Head of caudate nucleus (tissue), 42 donors: ENCODE measurements at regions of chrX and their contacts with region 1.

Region 1: GRCh38 chrX:11533211-11533651 is 132.5 kb downstream of the ARHGAP6 start:
- DNase-seq: peak in 1 of 42 donors; percentile 1

Region 2: DNA sequence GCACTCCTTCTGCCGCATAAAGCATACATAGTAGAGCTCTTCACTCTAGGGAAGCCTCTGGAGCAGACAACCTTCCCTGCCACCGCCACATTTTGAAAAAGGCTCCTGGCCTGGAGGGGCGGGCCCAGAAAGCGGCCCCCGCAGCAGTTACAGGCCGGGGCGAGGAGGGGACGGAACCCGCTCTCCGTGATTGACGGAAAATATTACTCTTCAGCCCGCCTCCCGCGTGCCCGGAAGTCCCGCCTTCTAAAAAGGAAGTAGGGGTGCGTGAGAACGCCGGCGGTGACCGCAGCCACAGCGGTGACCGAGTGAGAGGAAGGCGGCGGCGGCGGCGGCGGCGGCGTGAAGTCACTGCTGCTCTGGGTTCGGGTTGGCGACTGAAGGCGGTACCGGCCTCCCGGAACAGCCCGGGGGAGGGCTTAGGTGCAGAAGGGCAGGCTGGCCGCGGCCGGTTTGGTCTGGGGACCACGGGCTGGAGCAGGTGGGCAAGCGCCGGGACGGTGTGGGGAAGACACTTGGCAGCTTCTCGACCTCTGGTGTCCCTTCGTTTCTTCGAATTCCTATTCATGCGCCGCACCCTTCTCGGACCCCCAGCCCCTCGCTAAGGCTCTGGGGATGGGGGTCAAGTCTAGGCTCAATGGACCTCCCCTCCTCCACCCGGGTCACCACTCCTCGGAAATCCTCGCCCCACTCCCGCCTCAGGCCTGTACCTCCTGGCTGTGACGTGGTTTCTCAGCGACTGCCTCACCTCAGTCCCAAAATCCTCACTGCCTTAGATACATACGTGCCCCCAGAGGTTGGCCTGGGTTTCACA is 422.0 kb before region 1 on chrX and contains the start of gene HCCS:
- intact Hi-C with region 1: no loop called
- DNase-seq: peak; percentile 70 to 92 (median 85)

Region 3: DNA sequence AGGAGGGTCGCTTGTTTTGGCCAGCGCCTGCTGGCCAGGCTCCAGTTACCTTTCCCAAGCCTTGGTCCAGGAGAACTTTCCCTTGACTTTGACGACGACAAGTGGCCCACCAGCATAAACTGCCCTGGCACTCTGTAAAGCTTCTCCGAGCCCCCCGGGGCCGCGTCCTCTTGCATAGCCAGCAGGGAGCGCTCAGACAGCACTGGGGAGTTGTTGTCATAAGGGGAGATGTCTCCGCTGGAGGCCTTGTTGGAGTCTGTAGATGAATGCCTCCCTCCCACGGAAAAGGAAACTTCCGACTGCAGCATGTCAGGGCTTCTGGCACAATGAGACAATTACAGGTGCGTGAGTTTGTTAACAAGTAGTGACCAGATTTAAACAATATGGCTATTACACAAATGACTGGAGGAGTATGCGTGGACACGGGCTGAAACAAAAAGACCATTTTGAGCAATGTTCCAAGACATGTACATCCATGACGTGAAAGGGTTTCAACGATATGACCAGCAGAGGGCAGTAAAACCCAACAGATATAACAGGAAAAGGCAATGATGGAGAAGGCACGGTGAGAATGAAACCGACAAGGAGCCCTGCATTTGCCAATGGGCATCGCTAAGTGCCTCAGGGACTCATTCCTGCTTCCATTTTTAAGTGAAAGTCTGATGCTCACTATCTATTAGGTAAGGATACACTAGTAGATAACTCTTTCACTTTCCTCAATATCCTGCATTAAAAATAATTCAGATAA is 389.1 kb before region 1 on chrX:
- intact Hi-C with region 1: loop called (anchors 5 kb)
- DNase-seq: peak in 38 of 42 donors; percentile 2 to 87 (median 60)

Region 4: DNA sequence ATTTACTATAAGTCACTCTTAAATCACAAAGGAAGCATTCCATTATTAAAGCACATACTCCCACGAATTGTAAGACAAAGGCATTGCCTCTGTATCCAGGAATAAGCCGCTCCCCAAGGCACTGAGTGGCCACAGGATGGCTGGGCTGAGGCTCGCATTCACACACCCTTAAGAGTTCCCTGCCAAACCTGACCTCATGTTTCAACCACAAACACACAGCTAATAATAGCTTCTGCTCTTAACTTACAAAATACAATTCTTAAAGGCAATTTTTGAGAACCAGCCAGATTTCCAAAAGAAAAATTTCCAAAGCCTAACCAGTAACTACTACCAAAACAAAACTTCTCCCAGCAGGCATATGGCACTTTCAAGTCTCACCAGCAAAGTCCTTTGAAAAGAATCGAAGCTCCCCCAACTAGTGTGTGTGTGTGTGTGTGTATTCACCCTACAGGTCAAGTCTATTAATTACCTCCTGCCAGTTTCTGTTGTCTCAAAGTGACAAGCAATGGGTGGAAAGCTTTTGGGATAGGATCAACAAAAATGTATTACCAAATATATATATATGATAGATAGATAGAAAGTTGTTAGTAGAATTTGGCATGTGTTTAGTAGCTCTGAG is 96.5 kb after region 1 on chrX:
- intact Hi-C with region 1: no loop called
- DNase-seq: no peak

Region 5: DNA sequence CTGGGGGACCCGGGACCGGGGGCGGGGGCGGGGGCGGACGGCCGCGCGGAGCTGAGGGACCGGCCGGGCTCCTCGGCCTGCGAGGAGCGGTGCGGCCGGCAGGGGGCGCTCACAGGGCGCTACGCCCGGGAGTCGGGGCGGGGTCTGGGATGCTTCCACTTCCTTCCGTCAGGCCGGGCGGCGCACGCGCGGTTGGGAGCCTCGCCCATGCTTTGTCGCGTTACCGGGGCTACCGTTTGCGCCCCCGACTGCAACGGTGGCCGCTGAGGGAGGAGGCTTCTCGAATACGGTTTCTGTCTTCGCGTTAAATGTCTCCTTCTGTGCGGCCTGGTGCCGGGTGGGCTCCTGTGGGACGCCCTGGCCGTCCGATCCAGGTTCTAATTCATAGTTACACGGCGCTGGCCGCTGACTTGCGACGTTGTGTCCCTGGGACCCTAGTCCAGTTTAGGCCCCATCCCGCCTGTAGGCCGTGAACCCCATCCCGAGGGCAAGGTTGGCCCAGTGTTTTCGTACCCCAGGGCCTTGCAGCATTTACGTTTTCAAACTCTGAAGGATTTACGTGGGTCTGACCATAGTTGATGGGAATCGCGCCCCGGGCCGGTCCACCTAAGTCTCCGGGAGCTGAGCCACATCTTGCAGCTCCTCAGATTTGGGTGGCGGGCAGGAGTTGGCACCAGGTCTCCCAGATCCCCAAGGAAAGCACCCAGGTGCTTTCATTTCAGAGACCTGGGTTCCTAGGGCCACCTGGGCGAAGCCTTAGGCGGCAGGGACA is 225.4 kb after region 1 on chrX:
- intact Hi-C with region 1: loop called (anchors 5 kb)
- DNase-seq: peak; percentile 66 to 94 (median 88)

Region 6: GRCh38 chrX:12042615-12043014 is 509.4 kb after region 1 on chrX:
- intact Hi-C with region 1: no loop called
- DNase-seq: no peak